HCT116 (cell line): ENCODE measurements at regions of chr1 and their contacts with region 1.

Region 1: DNA sequence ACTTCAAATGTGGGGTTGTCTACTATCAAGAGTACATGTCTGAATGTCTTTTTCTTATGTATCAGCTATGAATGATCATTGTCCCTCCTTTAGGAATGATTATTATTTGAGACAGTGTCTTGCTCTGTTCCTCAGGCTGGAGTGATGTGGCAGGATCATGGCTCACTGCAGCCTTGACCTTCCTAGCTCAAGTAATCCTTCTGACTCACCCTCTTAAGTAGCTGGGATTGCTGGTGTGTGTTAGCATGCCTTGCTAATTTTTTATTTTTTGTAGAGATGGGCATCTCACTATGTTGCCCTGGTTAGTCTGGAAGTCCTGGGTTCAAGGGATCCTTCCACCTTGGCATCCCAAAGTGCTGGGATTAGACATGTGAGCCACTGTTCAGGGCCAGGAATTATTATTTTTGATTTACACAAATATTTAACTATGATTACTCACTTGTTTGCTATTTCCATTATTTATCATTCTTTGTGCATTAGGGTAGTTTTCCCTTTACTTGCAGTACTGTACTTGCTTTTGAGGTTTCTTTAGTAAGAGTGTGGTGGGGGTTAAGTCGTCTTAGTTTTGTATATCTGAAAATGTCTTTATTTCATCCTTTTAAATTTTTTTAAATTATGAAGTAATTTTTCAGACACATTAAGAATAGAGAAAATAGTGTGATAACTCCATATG is 12.8 kb downstream of the S100A7 start:
- DNase-seq: no peak
- ATAC-seq: no peak; the same call in 1 of the 2 replicates
- H3K4me3 ChIP-seq: no peak overlapping the region
- H3K27ac ChIP-seq: no peak overlapping the region
- H3K4me1 ChIP-seq: peaks cover 0 to 7% of the 10 kb centered on the region in 2 experiments; a peak in 1 of 4 replicates
- H3K27me3 ChIP-seq: peaks cover 65% of the 10 kb centered on the region
- CTCF ChIP-seq: no peak
- POLR2A ChIP-seq: no peak
- RAD21 ChIP-seq: no peak

Region 2: GRCh38 chr1:153352523-153352922 is 95.1 kb before region 1 on chr1:
- CTCF ChIA-PET with region 1: no interaction called
- POLR2A ChIA-PET with region 1: no interaction called
- RAD21 ChIA-PET with region 1: no interaction called
- intact Hi-C with region 1: no loop called
- DNase-seq: peak; percentile 55
- ATAC-seq: peak; percentile 68
- H3K4me3 ChIP-seq: no peak overlapping the region
- H3K27ac ChIP-seq: no peak overlapping the region
- H3K4me1 ChIP-seq: no peaks in the 10 kb centered on the region; a peak in 1 of 4 replicates
- H3K27me3 ChIP-seq: peaks cover 22% of the 10 kb centered on the region
- CTCF ChIP-seq: peak; percentile 82 to 85 (median 84)
- POLR2A ChIP-seq: no peak
- RAD21 ChIP-seq: peak; percentile 88

Region 3: GRCh38 chr1:153422450-153423068 is 25.1 kb before region 1 on chr1:
- CTCF ChIA-PET with region 1: no interaction called
- POLR2A ChIA-PET with region 1: no interaction called
- RAD21 ChIA-PET with region 1: no interaction called
- intact Hi-C with region 1: loop called (anchors 2 kb)
- DNase-seq: peak; percentile 28
- ATAC-seq: peak; percentile 74
- H3K4me3 ChIP-seq: no peak overlapping the region
- H3K27ac ChIP-seq: no peak overlapping the region
- H3K4me1 ChIP-seq: no peaks in the 10 kb centered on the region
- H3K27me3 ChIP-seq: peaks cover 77% of the 10 kb centered on the region
- CTCF ChIP-seq: no peak
- POLR2A ChIP-seq: no peak
- RAD21 ChIP-seq: no peak